ENCODE measurements at regions of chr1 and their contacts with region 1.

Region 1: GRCh38 chr1:84944767-84945486 is 51.9 kb upstream of the LPAR3 start:
- DNase-seq: peak; percentile 75
- ATAC-seq: peak; percentile 92
- H3K4me3 Mint-ChIP-seq: peak overlapping the region; percentile 65
- H3K27ac Mint-ChIP-seq: peak overlapping the region; percentile 89
- H3K4me1 Mint-ChIP-seq: peaks cover 26% of the 10 kb centered on the region
- H3K27me3 Mint-ChIP-seq: no peaks in the 10 kb centered on the region

Region 2: DNA sequence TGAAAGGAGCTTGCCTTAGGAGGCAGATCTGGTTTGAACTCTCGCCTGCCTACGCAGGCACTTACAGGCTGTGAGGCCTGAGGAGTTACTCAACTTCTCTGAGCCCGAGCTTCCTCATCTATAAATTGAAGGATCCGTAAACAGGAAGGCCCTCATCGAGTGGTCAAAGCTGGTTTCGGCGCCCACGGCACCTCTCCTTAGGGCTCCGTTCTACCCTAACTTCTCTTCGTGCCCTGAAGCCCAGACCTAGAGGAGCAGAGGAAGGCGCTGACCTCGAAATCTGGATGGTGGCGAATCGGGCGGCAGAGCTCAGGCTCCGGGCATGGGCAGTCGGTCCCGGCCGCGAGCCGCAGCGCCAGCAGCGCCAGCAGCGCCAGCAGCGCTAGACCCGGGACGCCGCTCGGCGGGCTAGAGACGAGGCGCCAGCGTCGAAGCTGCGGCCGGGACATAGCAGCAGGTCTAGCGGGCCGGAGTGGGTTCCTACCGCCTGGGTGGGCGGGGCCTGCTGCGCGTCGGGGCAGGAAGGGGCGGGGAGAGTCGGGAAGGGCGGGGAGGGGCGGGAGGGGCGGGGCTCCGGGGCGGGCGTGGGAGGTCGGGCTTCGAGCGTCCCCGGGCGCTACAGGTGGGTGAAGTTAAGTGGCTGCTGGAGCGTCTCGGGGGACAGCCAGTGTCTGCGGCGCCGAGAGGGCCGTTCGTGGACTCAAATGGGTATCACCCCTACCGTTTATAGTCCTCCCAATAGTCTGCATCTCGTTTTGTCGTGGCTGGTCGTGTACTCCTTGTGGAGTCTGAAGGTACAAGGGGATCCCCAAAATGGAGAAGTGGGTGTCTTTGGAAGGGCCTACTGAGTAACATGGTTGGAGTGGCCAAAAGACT is 370.7 kb before region 1 on chr1 and contains the start of gene CTBS:
- CTCF ChIA-PET with region 1: no interaction called
- POLR2A ChIA-PET with region 1: no interaction called
- intact Hi-C with region 1: loop called in 1 of 2 experiments (anchors 5 kb)
- DNase-seq: peak; percentile 94
- ATAC-seq: peak; percentile 85
- H3K4me3 Mint-ChIP-seq: peak within 1 kb of the TSS; percentile 97
- H3K27ac Mint-ChIP-seq: peak within 1 kb of the TSS; percentile 99
- H3K4me1 Mint-ChIP-seq: peaks cover 45% of the 10 kb centered on the region
- H3K27me3 Mint-ChIP-seq: no peaks in the 10 kb centered on the region
- total RNA-seq, gene CTBS: 13.5 to 17.3 TPM

Region 3: DNA sequence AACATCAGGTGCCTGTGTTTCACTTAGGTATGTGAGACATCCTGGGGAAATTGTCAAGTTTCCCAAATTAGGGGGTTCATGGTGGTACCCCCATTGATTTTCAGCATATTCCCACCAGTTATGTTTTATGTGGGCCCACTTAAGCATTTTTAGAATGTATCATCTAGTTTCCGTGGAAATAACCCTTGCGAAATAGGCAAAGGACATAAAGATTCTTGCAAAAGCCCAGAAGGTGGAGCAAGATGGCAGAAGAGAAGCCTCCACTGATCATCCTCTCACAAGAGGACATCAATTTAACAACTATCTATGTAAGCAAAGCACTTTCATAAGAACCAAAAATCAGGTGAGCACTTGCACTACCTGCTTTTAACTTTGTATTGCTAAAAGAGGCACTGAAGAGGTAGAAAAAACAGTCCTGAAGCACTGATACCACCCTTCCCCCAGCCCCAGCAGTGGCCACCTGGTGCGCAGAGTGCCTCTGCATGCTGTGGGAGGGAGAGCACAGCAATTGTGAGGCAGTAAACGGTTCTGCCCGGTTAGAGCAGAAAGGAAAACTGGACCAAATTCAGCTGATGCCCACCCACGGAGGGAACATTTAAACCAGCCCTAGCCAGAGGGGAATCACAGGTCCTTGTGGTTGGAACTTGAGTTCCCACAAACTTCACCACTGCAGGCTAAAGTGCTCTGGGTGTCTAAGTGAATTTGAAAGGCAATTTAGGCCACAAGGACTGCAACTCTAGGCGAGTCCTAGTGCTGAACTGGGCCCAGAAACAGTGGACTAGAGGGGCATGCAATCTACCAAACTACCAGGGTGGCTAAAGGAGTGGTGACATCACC is 28.8 kb after region 1 on chr1:
- CTCF ChIA-PET with region 1: interaction called, 7 read pairs
- POLR2A ChIA-PET with region 1: no interaction called
- intact Hi-C with region 1: loop called in 1 of 2 experiments (anchors 1 kb)
- DNase-seq: peak; percentile 41
- ATAC-seq: no peak
- H3K4me3 Mint-ChIP-seq: no peak overlapping the region
- H3K27ac Mint-ChIP-seq: peak overlapping the region; percentile 35
- H3K4me1 Mint-ChIP-seq: peaks cover 60% of the 10 kb centered on the region
- H3K27me3 Mint-ChIP-seq: no peaks in the 10 kb centered on the region

Region 4: DNA sequence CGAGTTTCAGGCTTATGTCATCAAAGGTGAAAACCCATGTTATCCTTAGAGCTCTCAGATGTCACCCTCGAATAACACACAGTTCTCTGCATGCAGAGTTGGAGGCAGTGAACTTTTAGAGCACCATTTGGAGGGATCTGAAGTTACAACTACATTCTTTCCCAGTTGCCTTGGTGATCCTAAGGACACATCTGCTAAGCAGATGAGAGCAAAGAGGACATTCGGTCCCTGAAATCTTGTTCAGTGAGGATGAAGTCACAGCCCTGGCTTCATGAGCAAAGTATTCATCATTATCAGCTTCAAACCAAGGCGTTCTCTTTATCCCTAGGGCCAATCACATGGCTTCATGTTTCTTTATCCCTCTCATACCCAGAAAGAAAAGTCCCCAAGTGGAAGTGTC is 75.1 kb after region 1 on chr1:
- CTCF ChIA-PET with region 1: interaction called, 44 read pairs
- POLR2A ChIA-PET with region 1: no interaction called
- intact Hi-C with region 1: no loop called
- DNase-seq: no peak
- ATAC-seq: no peak
- H3K4me3 Mint-ChIP-seq: no peak overlapping the region
- H3K27ac Mint-ChIP-seq: no peak overlapping the region
- H3K4me1 Mint-ChIP-seq: no peaks in the 10 kb centered on the region
- H3K27me3 Mint-ChIP-seq: peaks cover 2% of the 10 kb centered on the region

Region 5: GRCh38 chr1:85061711-85062424 is 116.9 kb after region 1 on chr1:
- CTCF ChIA-PET with region 1: interaction called, 10 read pairs
- POLR2A ChIA-PET with region 1: no interaction called
- intact Hi-C with region 1: loop called (anchors 1 kb)
- DNase-seq: peak; percentile 91
- ATAC-seq: peak; percentile 100
- H3K4me3 Mint-ChIP-seq: peak overlapping the region; percentile 74
- H3K27ac Mint-ChIP-seq: peak overlapping the region; percentile 66
- H3K4me1 Mint-ChIP-seq: peaks cover 13% of the 10 kb centered on the region
- H3K27me3 Mint-ChIP-seq: peaks cover 12% of the 10 kb centered on the region

Region 6: DNA sequence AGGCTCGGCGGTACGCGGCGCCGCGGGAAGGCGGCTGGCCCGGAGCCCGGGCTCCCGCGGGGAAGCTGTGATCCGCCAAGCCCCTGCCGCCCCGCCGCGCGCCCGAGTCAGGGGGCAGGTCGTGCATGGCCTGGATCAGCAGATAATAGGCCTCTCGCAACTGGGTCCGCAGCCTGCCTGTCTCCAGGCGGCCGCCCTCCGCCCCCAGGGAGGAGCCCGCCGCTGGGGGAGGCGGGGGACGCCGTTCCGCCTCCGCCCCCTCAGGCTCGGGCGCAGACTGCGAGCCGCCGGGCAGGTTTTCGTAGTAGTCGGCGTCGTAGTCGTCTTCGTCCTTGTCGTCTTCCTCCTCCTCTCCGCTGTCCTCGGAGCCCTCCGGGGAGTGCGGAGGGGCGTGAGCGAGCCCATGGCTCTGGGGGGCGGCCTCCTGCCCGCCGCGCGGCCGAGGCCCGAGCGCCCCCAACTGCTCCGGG is 256.0 kb after region 1 on chr1 and contains the start of gene SYDE2:
- CTCF ChIA-PET with region 1: interaction called, 7 read pairs
- POLR2A ChIA-PET with region 1: no interaction called
- intact Hi-C with region 1: loop called in 1 of 2 experiments (anchors 1 kb)
- DNase-seq: peak; percentile 79
- ATAC-seq: peak; percentile 76
- H3K4me3 Mint-ChIP-seq: peak within 1 kb of the TSS; percentile 90
- H3K27ac Mint-ChIP-seq: peak within 1 kb of the TSS; percentile 88
- H3K4me1 Mint-ChIP-seq: peaks cover 25% of the 10 kb centered on the region
- H3K27me3 Mint-ChIP-seq: peaks cover 12% of the 10 kb centered on the region
- total RNA-seq, gene SYDE2: 2.9 to 3.3 TPM

Region 7: DNA sequence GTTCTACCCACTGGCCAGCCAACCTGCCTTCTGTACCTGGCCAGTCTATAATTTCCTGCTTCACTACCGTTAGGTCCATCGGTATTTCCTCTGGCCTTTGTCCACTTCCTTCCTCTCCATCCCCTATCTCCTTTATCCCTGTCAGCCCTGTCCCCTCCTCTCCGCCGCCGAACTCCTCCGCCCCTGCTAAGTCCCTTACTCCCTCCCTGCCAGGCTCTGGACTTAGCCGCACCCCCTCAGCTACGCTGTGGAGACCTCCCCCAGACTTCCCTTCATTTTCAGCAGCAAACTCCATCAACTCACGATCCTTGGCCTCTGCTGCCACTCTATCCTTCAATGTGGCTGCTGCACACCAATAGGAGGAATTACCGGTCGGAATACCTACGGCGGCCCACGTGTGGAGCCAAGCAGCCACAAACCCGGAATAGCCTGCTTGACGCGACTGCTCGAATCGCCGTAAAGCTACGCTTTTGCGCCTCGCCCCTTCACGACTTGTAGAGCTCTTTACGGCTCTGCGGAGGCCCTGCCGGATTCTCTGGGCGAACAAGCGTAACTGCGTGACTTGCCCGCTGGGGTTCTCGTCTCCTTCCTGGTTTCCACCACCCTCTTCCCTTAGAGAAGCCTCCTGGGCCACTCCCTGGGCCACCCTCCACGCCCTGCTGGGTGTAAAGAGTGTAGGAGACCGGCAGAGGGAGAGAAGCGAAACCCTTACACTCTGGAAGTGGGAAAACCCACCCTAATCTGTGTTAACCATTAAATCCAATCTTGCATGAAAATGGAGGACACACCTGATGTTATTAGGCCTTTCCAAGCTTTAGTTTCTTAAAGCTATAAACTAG is 763.3 kb after region 1 on chr1 and contains the start of gene ZNHIT6:
- CTCF ChIA-PET with region 1: no interaction called
- POLR2A ChIA-PET with region 1: no interaction called
- intact Hi-C with region 1: loop called in 1 of 2 experiments (anchors 5 kb)
- DNase-seq: peak; percentile 93
- ATAC-seq: peak; percentile 96
- H3K4me3 Mint-ChIP-seq: no peak within 1 kb of the TSS
- H3K27ac Mint-ChIP-seq: no peak within 1 kb of the TSS
- H3K4me1 Mint-ChIP-seq: peaks cover 26% of the 10 kb centered on the region
- H3K27me3 Mint-ChIP-seq: no peaks in the 10 kb centered on the region
- total RNA-seq, gene ZNHIT6: 20.7 to 23.8 TPM

Measured in activated CD4-positive, alpha-beta T cell treated with anti-CD3 and anti-CD28 coated beads for 36 hours (primary cell).